ENCODE measurements at regions of chr15 and their contacts with region 1.

Region 1: DNA sequence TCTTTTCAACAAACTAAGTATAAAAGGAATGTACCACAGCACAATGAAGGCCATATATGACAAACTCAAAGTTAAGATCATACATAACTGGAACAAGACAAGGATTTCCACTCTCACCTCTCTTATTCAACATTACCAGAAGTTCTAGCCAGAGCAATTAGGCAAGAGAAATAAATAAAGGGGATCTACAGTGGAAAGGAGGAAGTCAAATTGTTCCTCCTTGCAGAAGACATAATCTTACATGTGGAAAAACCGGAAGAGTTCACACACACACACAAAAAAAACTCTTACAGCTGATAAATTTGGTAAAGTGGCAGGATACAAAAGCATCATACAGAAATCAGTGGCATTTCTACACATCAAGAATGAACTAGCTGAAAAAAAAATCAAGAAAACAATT is 277.9 kb downstream of the MCTP2 start:
- DNase-seq: no peak
- H3K4me3 ChIP-seq: no peak overlapping the region
- H3K27ac ChIP-seq: no peak overlapping the region
- H3K4me1 ChIP-seq: no peaks in the 10 kb centered on the region
- H3K27me3 ChIP-seq: no peaks in the 10 kb centered on the region
- CTCF ChIP-seq: no peak

Region 2: GRCh38 chr15:94460624-94461023 is 48.6 kb before region 1 on chr15:
- CTCF ChIA-PET with region 1: no interaction called
- dilution Hi-C with region 1: loop called (anchors 5 kb)
- in situ Hi-C with region 1: no loop called
- intact Hi-C with region 1: no loop called
- DNase-seq: no peak
- H3K4me3 ChIP-seq: no peak overlapping the region
- H3K27ac ChIP-seq: no peak overlapping the region
- H3K4me1 ChIP-seq: no peaks in the 10 kb centered on the region
- H3K27me3 ChIP-seq: no peaks in the 10 kb centered on the region
- CTCF ChIP-seq: no peak